HepG2 (cell line): ENCODE measurements at regions of chr12 and their contacts with region 1.

Region 1: DNA sequence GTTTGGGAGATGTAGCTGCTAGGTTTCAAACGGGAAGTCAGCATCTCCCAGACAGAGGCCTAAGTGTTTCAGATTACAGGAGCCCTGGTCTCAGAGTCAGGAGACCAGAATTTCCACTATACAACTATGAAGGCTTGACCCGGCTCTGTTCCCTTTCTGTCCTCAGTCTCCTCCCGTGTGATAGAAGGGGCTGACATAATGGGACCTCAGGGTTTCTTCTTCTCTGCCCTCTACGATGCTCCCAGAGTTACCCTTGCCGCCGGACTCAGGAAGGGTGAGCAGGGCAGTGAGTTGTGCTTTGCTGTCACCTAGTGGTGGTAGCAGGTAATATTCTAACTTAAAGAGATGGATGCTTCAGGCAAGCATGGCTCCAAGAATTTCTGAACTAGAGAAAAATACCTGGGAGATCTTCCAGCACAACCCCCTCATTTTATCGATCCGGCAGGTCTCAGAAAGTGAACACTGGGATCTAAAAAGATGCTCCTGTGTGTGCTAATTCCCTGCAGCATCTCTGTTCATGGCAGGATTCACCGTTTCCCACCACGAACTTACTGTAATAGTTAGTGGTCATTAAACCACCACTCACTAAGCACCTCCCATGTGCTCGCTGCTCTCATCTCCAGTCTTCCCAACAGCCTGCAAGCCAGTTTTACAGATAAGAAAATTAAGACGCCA is 84.4 kb downstream of the VWF start:
- DNase-seq: peak; percentile 51
- ATAC-seq: peak; percentile 80
- H3K4me3 ChIP-seq: no peak overlapping the region
- H3K27ac ChIP-seq: no peak overlapping the region
- H3K4me1 ChIP-seq: no peaks in the 10 kb centered on the region
- H3K27me3 ChIP-seq: no peaks in the 10 kb centered on the region
- CTCF ChIP-seq: peak; percentile 92
- EP300 ChIP-seq: no peak
- POLR2A ChIP-seq: no peak
- RAD21 ChIP-seq: peak; percentile 58

Region 2: GRCh38 chr12:5965950-5966383 is 74.1 kb before region 1 on chr12:
- CTCF ChIA-PET with region 1: interaction called, 8 read pairs
- POLR2A ChIA-PET with region 1: interaction called, 3 read pairs
- in situ Hi-C with region 1: no loop called
- intact Hi-C with region 1: loop called (anchors 1 kb)
- DNase-seq: peak; percentile 28
- ATAC-seq: peak; percentile 96
- H3K4me3 ChIP-seq: no peak overlapping the region
- H3K27ac ChIP-seq: no peak overlapping the region
- H3K4me1 ChIP-seq: peaks cover 15% of the 10 kb centered on the region
- H3K27me3 ChIP-seq: peaks cover 1 to 9% of the 10 kb centered on the region in 2 experiments; a peak in 2 of 5 replicates
- CTCF ChIP-seq: peak; percentile 82
- EP300 ChIP-seq: no peak
- POLR2A ChIP-seq: no peak
- RAD21 ChIP-seq: 0 out of 2 replicates have a peak, but pooled peaks have one; percentile 18

Region 3: DNA sequence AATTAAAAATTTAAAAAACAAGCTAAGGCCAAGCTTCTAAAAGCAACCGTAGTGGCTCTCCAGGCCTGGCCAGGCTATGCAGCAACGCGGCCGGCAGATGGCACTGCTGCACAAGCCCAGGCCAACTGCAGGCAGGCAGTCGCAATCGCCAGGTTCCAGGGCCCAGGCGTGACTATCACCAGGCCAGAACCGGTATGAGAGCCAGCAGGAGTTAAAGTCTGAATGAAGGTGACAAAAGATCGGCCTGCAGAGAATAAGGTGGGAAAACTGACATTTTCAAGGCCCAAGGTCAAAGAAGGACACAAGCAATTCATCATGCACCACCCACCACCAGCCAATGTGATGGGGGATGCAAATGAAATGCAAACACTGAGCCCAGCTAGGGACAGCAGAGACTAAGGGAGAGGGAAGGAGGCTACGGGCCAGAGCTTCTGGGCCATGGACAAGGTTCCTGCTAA is 51.3 kb before region 1 on chr12:
- CTCF ChIA-PET with region 1: interaction called, 141 read pairs
- POLR2A ChIA-PET with region 1: no interaction called
- in situ Hi-C with region 1: loop called (anchors 5 kb)
- intact Hi-C with region 1: loop called (anchors 1 kb)
- DNase-seq: peak; percentile 37
- ATAC-seq: peak; percentile 97
- H3K4me3 ChIP-seq: no peak overlapping the region
- H3K27ac ChIP-seq: no peak overlapping the region
- H3K4me1 ChIP-seq: peaks cover 13% of the 10 kb centered on the region
- H3K27me3 ChIP-seq: no peaks in the 10 kb centered on the region
- CTCF ChIP-seq: peak; percentile 94
- EP300 ChIP-seq: no peak
- POLR2A ChIP-seq: no peak
- RAD21 ChIP-seq: peak; percentile 94

Region 4: GRCh38 chr12:6084261-6084968 is 44.4 kb after region 1 on chr12:
- CTCF ChIA-PET with region 1: no interaction called
- POLR2A ChIA-PET with region 1: no interaction called
- in situ Hi-C with region 1: no loop called
- intact Hi-C with region 1: no loop called
- DNase-seq: no peak
- ATAC-seq: no peak
- H3K4me3 ChIP-seq: no peak overlapping the region
- H3K27ac ChIP-seq: no peak overlapping the region
- H3K4me1 ChIP-seq: peaks cover 27% of the 10 kb centered on the region
- H3K27me3 ChIP-seq: peaks cover 3 to 13% of the 10 kb centered on the region in 2 experiments; a peak in 2 of 5 replicates
- CTCF ChIP-seq: no peak
- EP300 ChIP-seq: no peak
- POLR2A ChIP-seq: no peak
- RAD21 ChIP-seq: no peak

Region 5: GRCh38 chr12:6161124-6161882 is 121.3 kb after region 1 on chr12:
- CTCF ChIA-PET with region 1: no interaction called
- POLR2A ChIA-PET with region 1: no interaction called
- in situ Hi-C with region 1: no loop called
- intact Hi-C with region 1: no loop called
- DNase-seq: no peak
- ATAC-seq: peak; percentile 14; the same call in 1 of the 3 replicates
- H3K4me3 ChIP-seq: no peak overlapping the region
- H3K27ac ChIP-seq: no peak overlapping the region
- H3K4me1 ChIP-seq: peaks cover 30% of the 10 kb centered on the region
- H3K27me3 ChIP-seq: peaks cover 4 to 18% of the 10 kb centered on the region in 2 experiments; a peak in 2 of 5 replicates
- CTCF ChIP-seq: no peak
- EP300 ChIP-seq: no peak
- POLR2A ChIP-seq: no peak
- RAD21 ChIP-seq: no peak

Region 6: DNA sequence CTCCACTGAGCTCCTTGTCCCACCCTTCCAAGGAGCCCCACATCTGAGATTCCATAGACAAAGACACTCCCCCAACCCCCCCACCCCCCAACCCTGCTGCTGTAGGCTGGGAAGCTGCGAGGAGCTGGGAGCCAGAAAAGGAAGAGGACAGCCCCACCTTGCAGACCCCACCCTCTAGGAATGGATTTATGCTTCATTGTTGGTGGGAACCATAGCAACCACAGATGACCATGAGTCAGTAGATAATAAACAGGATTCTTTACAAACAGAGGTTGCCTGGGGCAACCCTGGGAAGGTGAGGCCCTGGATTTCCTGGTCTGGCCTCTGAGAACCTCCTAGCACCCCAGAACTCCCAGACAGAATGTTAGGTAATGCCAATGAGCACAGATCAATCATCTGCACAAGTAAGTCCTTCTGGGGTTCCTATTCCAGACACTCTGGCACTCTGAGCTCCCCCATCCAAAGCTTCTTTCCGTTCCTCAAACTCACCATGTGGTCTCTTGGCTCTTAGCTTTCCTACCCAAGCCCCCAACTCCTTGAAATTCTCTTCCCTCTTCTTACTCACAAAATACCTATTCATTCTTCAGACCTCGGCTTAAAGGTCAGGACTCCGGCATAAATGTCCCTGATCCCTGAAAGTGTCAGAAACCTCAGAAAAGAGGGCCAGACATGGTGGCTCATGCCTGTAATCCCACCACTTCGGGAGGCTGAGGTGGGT is 255.2 kb after region 1 on chr12:
- CTCF ChIA-PET with region 1: no interaction called
- POLR2A ChIA-PET with region 1: no interaction called
- in situ Hi-C with region 1: no loop called
- intact Hi-C with region 1: no loop called
- DNase-seq: peak; percentile 98
- ATAC-seq: peak; percentile 91
- H3K4me3 ChIP-seq: peak overlapping the region; percentile 5 to 51 (median 33); a peak in 4 of 6 replicates
- H3K27ac ChIP-seq: peak overlapping the region; percentile 100
- H3K4me1 ChIP-seq: peaks cover 75% of the 10 kb centered on the region
- H3K27me3 ChIP-seq: no peaks in the 10 kb centered on the region
- CTCF ChIP-seq: no peak
- EP300 ChIP-seq: peak; percentile 81 to 94
- POLR2A ChIP-seq: peak; percentile 19 to 79; a peak in 3 of 4 replicates
- RAD21 ChIP-seq: no peak